Right cardiac atrium (tissue), 5 donors: ENCODE measurements at regions of chr17 and their contacts with region 1.

Region 1: GRCh38 chr17:61412143-61412859 is 12.7 kb downstream of the TBX2 start:
- DNase-seq: peak; percentile 82 to 95 (median 94)
- ATAC-seq: peak; percentile 81 to 85
- H3K4me3 ChIP-seq: peak overlapping the region; percentile 68
- H3K27ac ChIP-seq: peak overlapping the region; percentile 55
- H3K4me1 ChIP-seq: no peaks in the 10 kb centered on the region
- H3K27me3 ChIP-seq: no peaks in the 10 kb centered on the region

Region 2: GRCh38 chr17:61551255-61551742 is 139.0 kb after region 1 on chr17:
- intact Hi-C with region 1: loop called in 2 of 4 experiments (anchors 5 to 10 kb)
- DNase-seq: no peak
- ATAC-seq: no peak
- H3K4me3 ChIP-seq: no peak overlapping the region
- H3K27ac ChIP-seq: no peak overlapping the region
- H3K4me1 ChIP-seq: no peaks in the 10 kb centered on the region
- H3K27me3 ChIP-seq: no peaks in the 10 kb centered on the region

Region 3: GRCh38 chr17:61837175-61838051 is 425.1 kb after region 1 on chr17:
- intact Hi-C with region 1: loop called in 2 of 4 experiments (anchors 5 to 10 kb)
- DNase-seq: peak; percentile 46 to 72 (median 48)
- ATAC-seq: no peak
- H3K4me3 ChIP-seq: no peak overlapping the region
- H3K27ac ChIP-seq: no peak overlapping the region
- H3K4me1 ChIP-seq: no peaks in the 10 kb centered on the region
- H3K27me3 ChIP-seq: no peaks in the 10 kb centered on the region

Region 4: GRCh38 chr17:61843435-61843834 is 431.1 kb after region 1 on chr17:
- intact Hi-C with region 1: loop called in 2 of 4 experiments (anchors 5 to 10 kb)
- DNase-seq: no peak
- ATAC-seq: no peak
- H3K4me3 ChIP-seq: no peak overlapping the region
- H3K27ac ChIP-seq: no peak overlapping the region
- H3K4me1 ChIP-seq: no peaks in the 10 kb centered on the region
- H3K27me3 ChIP-seq: no peaks in the 10 kb centered on the region

Region 5: DNA sequence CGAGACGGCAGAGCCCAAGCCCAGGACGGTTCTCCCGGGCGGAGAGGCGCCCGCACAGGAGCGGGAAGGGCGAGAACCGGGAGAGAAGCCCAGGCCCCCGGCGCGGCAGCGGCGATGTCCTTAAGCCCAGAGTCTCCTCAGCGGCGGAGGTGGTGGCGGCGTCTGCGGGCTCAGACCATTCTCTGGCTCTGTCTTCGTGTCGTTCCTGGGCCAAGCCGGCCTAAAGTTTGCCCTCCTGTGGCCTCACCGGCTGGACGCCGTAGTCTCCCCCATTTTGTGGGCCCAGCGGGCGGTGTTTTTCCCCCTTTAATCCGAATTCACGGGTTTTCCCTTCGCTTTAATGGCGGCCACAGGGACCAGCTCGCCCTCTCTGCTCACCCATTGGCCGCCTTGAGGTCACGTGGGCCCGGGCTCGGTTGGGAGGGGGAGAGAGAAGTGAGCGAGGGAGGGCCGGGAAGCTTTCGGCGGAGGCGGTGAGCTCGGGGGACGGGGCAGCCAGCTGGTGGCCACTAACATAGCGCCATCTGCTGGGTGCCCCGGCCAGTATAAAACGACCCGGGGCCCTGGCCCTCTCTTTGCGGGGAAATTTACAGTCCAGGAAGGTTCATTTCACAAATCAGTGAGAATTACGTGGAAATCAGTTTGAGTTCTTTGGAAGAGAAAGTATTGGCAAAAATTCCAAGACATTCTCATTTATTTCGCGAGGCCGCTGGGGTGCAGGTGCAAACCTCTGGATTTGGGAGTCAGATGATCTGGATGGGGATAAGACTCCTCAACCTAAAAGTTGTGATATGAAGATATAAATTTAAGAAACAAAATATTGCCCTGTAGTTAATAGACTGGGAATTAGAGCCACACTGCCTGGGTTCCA is 653.5 kb after region 1 on chr17:
- intact Hi-C with region 1: loop called in 2 of 4 experiments (anchors 5 to 10 kb)
- DNase-seq: peak; percentile 99 to 100 (median 99)
- ATAC-seq: peak; percentile 100
- H3K4me3 ChIP-seq: peak overlapping the region; percentile 97
- H3K27ac ChIP-seq: peak overlapping the region; percentile 100
- H3K4me1 ChIP-seq: no peaks in the 10 kb centered on the region
- H3K27me3 ChIP-seq: no peaks in the 10 kb centered on the region